ENCODE measurements at regions of chr20 and their contacts with region 1.

Region 1: DNA sequence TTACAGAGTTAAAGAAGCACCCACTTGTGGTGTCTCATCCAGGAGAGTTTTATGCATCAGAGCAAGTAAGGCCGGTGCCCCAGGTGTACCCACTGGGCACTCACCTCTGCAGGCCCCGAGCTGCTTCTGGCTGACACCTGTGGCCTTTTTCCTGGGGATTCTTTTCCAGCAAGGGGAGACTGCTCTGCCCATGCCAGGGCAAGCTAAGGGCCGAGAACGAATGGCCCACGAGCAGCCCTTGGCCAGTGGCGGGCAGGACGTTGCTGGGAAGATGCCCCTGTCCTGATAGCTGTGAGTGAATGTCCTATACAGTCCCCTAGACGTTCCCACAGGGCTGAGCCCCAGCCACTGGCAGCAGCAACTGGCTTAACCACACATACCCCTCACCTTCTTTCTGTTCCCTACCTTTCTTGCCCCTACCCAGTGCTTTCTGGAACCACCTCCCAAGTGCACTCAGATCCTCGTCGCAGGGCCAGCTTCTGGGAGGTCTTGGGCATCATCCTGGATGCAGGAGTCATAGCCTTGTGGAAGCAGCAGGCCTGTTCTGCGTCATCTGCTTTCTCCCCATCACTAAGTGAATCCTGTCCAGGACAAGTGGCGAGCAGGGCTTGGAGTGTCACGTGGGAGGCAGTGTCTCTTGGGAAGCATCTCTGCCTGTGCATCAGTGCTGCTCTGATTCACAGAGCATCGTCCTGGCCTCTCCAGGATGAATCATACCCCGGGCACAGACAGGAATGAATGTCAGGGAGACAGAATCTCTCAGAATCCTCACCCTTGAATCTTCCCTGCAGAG is 32.5 kb downstream of the SYNDIG1 start:
- DNase-seq: no peak
- ATAC-seq: peak in 4 of 8 donors; percentile 9 to 33 (median 27)
- H3K4me3 ChIP-seq: no peak overlapping the region
- H3K27ac ChIP-seq: peak overlapping the region in 9 of 10 donors; percentile 76 to 98 (median 88)
- H3K4me1 ChIP-seq: peaks cover 0 to 62% (median 16%) of the 10 kb centered on the region in 9 donors
- H3K27me3 ChIP-seq: no peaks in the 10 kb centered on the region
- CTCF ChIP-seq: no peak

Region 2: DNA sequence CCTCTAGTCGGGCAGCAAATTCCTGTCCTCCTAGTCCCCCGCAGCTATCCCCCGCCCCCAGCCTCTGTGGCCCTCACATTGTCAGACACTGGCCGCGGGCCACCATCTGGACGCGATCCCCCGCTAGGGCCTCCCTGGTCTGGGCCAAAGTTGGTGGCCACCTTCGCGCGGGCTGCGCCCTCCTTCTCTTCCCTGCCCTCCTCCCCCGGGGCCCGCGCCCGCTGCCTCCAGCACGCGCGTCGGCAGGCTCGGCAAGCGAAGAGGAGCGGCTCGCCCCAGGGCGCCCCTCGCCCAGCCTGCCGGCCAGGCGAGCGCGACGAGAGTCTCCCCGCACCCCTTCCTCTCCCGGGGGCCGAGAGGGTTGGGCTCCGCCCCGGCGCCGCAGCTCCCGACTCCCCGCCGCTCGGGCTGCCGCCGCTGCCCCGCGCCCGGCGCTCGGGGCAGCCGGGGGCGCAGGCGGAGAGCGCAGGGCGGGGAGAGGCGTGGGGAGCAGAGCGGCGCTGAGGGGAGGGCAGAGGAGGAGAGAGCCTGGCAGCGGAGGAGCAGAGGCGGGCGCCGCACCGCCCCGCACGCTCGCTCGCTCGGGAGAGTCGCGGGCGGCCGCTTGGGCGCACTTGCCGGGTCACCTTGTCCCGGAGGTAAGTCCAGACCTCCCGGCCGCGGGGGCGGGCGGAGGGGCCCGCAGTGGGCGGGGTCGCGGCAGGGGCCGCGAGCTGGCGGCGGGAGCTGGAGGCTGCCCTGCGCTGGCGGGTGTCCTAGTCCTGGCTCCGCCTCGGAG is 32.7 kb before region 1 on chr20 and contains the start of gene SYNDIG1:
- intact Hi-C with region 1: loop called in 2 of 10 experiments (anchors 5 kb)
- DNase-seq: peak; percentile 24 to 54
- ATAC-seq: peak; percentile 37 to 77 (median 51)
- H3K4me3 ChIP-seq: peak within 1 kb of the TSS; percentile 38 to 65 (median 58)
- H3K27ac ChIP-seq: peak within 1 kb of the TSS; percentile 20 to 92 (median 77)
- H3K4me1 ChIP-seq: peaks cover 0 to 41% (median 9%) of the 10 kb centered on the region in 9 donors
- H3K27me3 ChIP-seq: peaks cover 0 to 63% (median 45%) of the 10 kb centered on the region in 7 donors
- CTCF ChIP-seq: no peak
- total RNA-seq, gene SYNDIG1: 8.7 to 34.7 (median 22.6) TPM

Region 3: GRCh38 chr20:24634855-24635254 is 132.9 kb after region 1 on chr20:
- intact Hi-C with region 1: loop called in 1 of 10 experiments (anchors 10 kb)
- DNase-seq: no peak
- ATAC-seq: peak; percentile 38 to 79 (median 66)
- H3K4me3 ChIP-seq: no peak overlapping the region
- H3K27ac ChIP-seq: no peak overlapping the region
- H3K4me1 ChIP-seq: peaks cover 0 to 12% (median 0%) of the 10 kb centered on the region in 9 donors
- H3K27me3 ChIP-seq: no peaks in the 10 kb centered on the region
- CTCF ChIP-seq: no peak